ENCODE measurements at regions of chr21 and their contacts with region 1.

Region 1: GRCh38 chr21:33449616-33450015 is 30.2 kb downstream of the TMEM50B start:
- DNase-seq: no peak
- ATAC-seq: no peak
- H3K4me3 ChIP-seq: no peak overlapping the region
- H3K27ac ChIP-seq: no peak overlapping the region
- H3K4me1 ChIP-seq: no peaks in the 10 kb centered on the region
- H3K27me3 ChIP-seq: no peaks in the 10 kb centered on the region
- CTCF ChIP-seq: no peak

Region 2: DNA sequence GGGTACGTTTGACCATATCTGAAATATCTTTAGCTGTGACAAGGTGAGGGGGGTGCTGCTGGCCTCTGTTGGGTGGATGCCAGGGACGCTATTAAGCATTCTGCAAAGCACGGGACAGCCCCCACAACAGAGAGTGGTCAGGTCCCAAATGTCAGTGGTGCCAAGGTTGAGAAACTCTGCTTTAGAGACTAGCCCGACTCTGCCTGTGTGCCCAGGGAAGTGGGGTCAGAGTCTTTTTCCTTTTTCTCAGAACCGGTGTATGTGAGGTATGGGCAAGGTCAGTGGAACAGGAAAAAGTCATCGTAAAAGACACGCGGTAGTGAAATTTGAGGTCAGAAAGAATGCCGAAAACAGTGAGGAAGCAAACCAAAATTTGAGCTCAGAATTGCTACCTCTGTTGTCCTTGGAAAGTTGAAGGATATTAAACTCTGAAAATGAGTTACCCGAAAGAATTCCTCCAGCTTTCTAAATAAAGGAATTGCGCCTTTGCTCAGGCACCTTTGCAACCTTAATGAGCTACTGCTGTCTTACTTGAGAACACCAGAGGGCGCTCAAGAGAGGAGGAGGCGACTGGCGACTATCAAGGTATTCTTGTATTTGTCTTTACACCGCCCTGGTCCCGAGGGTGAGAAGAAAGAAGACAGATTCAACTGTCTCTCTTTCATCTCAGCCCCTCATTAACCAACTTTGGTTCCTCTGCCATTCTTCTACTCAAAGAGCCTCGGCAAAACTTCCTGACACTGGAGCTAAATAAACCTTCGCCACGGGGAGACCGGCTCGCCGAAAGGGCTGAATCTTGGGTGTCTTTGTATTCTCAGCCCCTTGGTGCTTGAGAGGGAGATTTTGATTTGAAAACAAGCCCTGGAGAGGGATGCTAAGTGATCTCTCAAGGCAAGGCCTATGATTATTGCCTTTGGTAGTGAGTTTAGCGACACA is 509.3 kb before region 1 on chr21:
- intact Hi-C with region 1: loop called in 1 of 2 experiments (anchors 5 kb)
- DNase-seq: no peak
- ATAC-seq: peak in 3 of 4 donors; percentile 55 to 72 (median 57)
- H3K4me3 ChIP-seq: no peak overlapping the region
- H3K27ac ChIP-seq: no peak overlapping the region
- H3K4me1 ChIP-seq: no peaks in the 10 kb centered on the region
- H3K27me3 ChIP-seq: no peaks in the 10 kb centered on the region
- CTCF ChIP-seq: peak; percentile 82

Region 3: DNA sequence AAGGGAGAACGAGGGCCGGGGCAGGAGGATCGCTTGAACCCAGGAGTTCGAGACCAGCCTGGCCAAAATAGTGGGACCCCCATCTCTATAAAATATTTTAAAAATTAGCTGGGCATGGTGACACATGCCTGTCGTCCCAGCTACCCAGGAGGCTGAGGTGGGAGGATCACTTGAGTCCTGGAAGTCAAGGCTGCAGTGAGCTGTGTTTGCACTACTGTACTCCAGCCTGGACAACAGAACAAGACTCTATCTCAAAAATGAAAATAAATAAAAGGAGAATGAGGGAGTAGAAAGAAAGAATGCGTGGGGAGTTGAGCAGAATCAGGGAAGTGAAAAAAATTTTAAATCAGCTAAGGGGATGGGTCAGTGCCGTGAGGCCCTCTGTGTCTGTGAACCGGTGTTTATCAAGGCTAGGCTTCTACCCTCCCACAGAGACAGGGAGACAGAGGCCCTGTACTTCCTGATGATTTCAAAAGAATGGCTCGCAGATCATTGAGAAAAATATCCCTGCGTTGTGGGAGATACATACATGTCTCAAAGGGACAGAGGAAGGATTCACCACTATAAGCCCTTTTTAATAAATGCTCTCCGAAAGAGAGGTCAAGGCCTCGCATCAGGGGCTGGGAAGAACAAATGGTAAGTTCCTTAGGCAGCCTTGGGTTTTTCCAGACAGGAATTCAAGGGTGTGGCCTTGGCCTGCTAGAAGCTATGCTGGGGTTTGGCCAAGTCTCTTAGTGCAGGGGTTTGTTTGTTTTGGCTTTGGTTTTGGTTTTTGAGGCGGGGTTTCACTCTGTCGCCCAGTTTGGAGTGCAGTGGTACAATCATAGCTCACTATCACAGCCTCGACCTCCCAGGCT is 162.8 kb before region 1 on chr21:
- intact Hi-C with region 1: no loop called
- DNase-seq: no peak
- ATAC-seq: peak in 1 of 4 donors; percentile 59
- H3K4me3 ChIP-seq: no peak overlapping the region
- H3K27ac ChIP-seq: peak overlapping the region; percentile 15
- H3K4me1 ChIP-seq: no peaks in the 10 kb centered on the region
- H3K27me3 ChIP-seq: no peaks in the 10 kb centered on the region
- CTCF ChIP-seq: no peak

Region 4: GRCh38 chr21:33360881-33361602 is 88.6 kb before region 1 on chr21:
- intact Hi-C with region 1: loop called in 1 of 2 experiments (anchors 5 kb)
- DNase-seq: peak; percentile 73 to 81
- ATAC-seq: peak; percentile 92 to 94 (median 94)
- H3K4me3 ChIP-seq: peak overlapping the region; percentile 41
- H3K27ac ChIP-seq: peak overlapping the region; percentile 0
- H3K4me1 ChIP-seq: peaks cover 12% of the 10 kb centered on the region
- H3K27me3 ChIP-seq: no peaks in the 10 kb centered on the region
- CTCF ChIP-seq: peak; percentile 80